Panc1 (cell line): ENCODE measurements at regions of chr1 and their contacts with region 1.

Region 1: DNA sequence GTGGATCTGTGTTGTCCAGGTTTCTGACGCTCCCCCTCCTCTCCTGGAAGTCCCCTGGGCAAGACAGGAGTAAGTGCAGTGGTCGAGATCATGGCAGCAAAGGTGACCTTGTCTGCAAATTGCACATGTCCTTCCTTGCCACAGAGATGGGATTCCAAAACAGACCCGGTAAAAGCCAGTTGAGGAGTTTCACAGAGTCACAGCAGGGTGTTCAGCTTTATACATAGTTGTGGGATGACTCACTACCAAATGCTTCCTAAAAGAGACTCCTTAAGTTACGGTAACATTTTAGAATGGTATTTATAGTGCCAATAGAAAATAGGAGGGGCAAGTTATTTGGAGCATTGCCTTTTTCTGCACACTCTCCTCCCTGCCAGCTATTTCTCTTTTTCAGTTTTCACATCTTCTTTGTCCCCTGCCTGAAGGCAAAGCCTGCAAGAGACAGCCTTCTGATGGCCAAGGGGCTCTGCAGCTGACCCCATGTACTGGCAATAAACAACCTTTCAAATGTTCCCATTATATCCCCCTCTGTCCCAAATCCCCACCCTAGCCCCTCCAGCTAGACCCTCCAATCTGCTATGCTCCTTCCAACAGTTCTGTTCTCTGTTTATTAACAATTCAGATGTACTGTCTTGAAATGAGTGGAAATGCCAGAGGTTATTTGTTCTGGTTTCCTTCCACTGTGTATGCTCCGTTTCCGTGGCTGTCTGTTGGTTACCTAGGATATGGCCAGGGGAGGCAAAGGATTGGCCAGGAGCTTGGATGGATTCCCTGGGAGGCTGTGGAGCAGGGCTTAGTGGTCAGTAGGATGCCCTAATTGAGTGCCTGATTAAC is 115.0 kb downstream of the TGFB2 start:
- DNase-seq: peak; percentile 86
- ATAC-seq: peak; percentile 92
- H3K4me3 ChIP-seq: peak overlapping the region in 1 of 2 experiments; percentile 31; a peak in 2 of 4 replicates
- H3K27ac ChIP-seq: peak overlapping the region; percentile 99
- H3K4me1 ChIP-seq: peaks cover 53% of the 10 kb centered on the region
- H3K27me3 ChIP-seq: no peaks in the 10 kb centered on the region
- CTCF ChIP-seq: no peak

Region 2: DNA sequence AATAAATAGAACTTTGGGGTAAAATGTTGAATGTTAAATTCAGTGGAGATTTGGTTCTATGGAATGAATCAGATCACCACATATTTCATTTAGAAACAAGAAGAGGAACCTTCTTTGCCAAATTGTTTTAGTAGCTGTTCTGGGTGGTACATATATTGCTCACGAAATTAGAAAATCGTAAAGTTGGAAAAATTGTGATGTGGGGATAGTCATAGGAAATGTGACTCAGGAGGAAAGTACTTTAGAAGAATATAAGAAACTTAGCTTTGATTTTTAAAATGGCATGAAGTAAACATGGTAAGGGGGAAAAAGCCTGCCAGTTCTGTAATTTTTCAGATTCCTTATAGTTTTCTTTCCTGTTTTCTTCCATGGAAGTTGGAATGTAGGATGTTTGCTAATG is 147.6 kb before region 1 on chr1:
- CTCF ChIA-PET with region 1: no interaction called
- POLR2A ChIA-PET with region 1: no interaction called
- in situ Hi-C with region 1: no loop called
- intact Hi-C with region 1: no loop called
- DNase-seq: no peak
- ATAC-seq: no peak
- H3K4me3 ChIP-seq: no peak overlapping the region
- H3K27ac ChIP-seq: no peak overlapping the region
- H3K4me1 ChIP-seq: 0 out of 2 replicates have a peak, but pooled peaks cover 2% of the 10 kb centered on the region
- H3K27me3 ChIP-seq: no peaks in the 10 kb centered on the region
- CTCF ChIP-seq: no peak

Region 3: GRCh38 chr1:218345673-218346390 is 114.3 kb before region 1 on chr1:
- CTCF ChIA-PET with region 1: no interaction called
- POLR2A ChIA-PET with region 1: no interaction called
- in situ Hi-C with region 1: no loop called
- intact Hi-C with region 1: loop called (anchors 5 kb)
- DNase-seq: no peak
- ATAC-seq: peak; percentile 80
- H3K4me3 ChIP-seq: peak overlapping the region; percentile 97 to 98
- H3K27ac ChIP-seq: peak overlapping the region; percentile 100
- H3K4me1 ChIP-seq: peaks cover 31% of the 10 kb centered on the region
- H3K27me3 ChIP-seq: no peaks in the 10 kb centered on the region
- CTCF ChIP-seq: no peak

Region 4: GRCh38 chr1:218361298-218362065 is 98.6 kb before region 1 on chr1:
- CTCF ChIA-PET with region 1: no interaction called
- POLR2A ChIA-PET with region 1: no interaction called
- in situ Hi-C with region 1: no loop called
- intact Hi-C with region 1: loop called (anchors 5 kb)
- DNase-seq: no peak
- ATAC-seq: peak; percentile 63
- H3K4me3 ChIP-seq: no peak overlapping the region
- H3K27ac ChIP-seq: peak overlapping the region; percentile 100
- H3K4me1 ChIP-seq: peaks cover 93% of the 10 kb centered on the region
- H3K27me3 ChIP-seq: no peaks in the 10 kb centered on the region
- CTCF ChIP-seq: peak; percentile 86

Region 5: DNA sequence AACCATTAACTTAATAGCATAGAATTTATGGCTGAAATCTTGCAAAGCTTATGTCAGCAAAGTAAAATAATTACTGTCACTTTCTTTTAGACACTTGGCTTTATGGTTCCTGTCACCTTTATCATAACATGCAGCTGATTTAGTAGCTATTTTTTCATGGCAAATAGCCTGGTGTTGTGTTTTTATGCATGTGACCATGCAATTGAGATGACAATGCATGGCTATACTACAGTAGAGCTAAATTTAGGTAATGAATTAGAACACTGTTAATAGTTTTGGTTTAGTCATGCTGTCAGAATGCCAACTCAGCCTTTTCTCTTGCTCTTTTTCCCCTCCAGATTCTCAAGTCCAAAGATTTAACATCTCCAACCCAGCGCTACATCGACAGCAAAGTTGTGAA is 26.4 kb before region 1 on chr1:
- CTCF ChIA-PET with region 1: no interaction called
- POLR2A ChIA-PET with region 1: no interaction called
- in situ Hi-C with region 1: no loop called
- intact Hi-C with region 1: no loop called
- DNase-seq: no peak
- ATAC-seq: no peak
- H3K4me3 ChIP-seq: no peak overlapping the region
- H3K27ac ChIP-seq: no peak overlapping the region; the same call in 1 of the 2 replicates
- H3K4me1 ChIP-seq: no peaks in the 10 kb centered on the region; the same call in 1 of the 2 replicates
- H3K27me3 ChIP-seq: no peaks in the 10 kb centered on the region
- CTCF ChIP-seq: no peak

Region 6: DNA sequence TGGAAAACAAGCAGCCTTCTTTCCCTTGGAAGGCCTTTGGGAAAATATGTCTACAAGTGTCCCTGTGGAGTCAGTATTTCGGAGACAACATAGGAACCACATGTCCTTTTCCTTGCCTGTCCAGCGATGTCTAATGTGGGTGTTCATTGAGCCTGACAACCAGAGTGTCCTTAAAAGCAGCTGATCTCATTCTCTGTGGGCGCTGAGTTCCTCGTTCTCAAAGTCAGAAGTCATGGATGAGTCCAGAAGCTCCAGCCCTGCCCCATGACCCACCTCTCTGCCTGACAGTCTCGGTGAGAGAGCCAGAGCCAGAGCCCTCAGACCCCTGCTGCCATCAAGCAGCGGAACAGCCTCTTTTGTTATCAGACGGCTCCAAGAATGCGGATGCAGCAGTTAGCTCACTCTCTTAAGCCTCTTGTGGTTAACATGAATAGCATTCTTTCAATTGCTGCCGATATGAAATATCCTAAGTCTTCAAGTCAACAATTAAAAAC is 214.2 kb after region 1 on chr1:
- CTCF ChIA-PET with region 1: no interaction called
- POLR2A ChIA-PET with region 1: no interaction called
- in situ Hi-C with region 1: no loop called
- intact Hi-C with region 1: loop called (anchors 5 kb)
- DNase-seq: no peak
- ATAC-seq: peak; percentile 89
- H3K4me3 ChIP-seq: peak overlapping the region in 1 of 2 experiments; percentile 26; a peak in 2 of 4 replicates
- H3K27ac ChIP-seq: peak overlapping the region; percentile 84
- H3K4me1 ChIP-seq: peaks cover 29% of the 10 kb centered on the region
- H3K27me3 ChIP-seq: no peaks in the 10 kb centered on the region
- CTCF ChIP-seq: peak; percentile 9; the same call in 1 of the 2 replicates